Activated B cell treated with CpG ODN at 0.5 μM for 24 hours (primary cell): ENCODE measurements at regions of chr21 and their contacts with region 1.

Region 1: GRCh38 chr21:29104239-29104708 is 26.2 kb upstream of the MAP3K7CL start:
- DNase-seq: no peak
- ATAC-seq: no peak
- H3K4me3 Mint-ChIP-seq: no peak overlapping the region
- H3K27ac Mint-ChIP-seq: no peak overlapping the region
- H3K4me1 Mint-ChIP-seq: peaks cover 11% of the 10 kb centered on the region
- H3K27me3 Mint-ChIP-seq: no peaks in the 10 kb centered on the region
- CTCF ChIP-seq: no peak

Region 2: GRCh38 chr21:28633839-28634555 is 470.3 kb before region 1 on chr21:
- CTCF ChIA-PET with region 1: no interaction called
- POLR2A ChIA-PET with region 1: no interaction called
- intact Hi-C with region 1: no loop called
- DNase-seq: no peak
- ATAC-seq: no peak
- H3K4me3 Mint-ChIP-seq: no peak overlapping the region
- H3K27ac Mint-ChIP-seq: no peak overlapping the region
- H3K4me1 Mint-ChIP-seq: peaks cover 4% of the 10 kb centered on the region
- H3K27me3 Mint-ChIP-seq: no peaks in the 10 kb centered on the region
- CTCF ChIP-seq: no peak

Region 3: DNA sequence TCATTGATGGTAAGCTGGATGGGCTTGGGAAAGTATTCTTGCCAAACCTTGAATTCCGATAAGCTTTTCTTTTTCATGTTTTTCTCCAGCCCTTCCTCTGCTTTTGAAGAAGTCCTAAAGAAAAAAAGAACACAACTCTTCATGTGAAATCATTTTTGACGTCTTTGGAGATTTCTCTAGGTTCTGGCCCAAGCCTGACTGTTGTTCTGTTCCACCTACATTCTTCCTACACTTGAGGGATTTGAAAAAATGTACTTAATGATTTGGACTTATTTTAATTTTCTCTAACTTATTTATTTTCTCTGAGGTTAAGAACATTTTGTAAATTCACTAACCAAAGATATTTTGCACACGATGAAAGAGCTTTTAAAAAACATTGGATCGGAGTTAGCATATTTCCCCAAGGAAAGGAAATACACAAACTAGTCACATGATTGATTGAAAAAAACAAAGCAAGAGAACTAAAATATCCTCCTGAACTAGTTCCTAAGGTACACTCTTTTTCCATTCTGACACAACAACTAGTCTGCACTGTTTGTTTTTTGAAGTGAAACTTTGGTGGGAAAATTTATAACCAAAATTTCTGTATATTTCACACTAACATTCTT is 193.9 kb before region 1 on chr21:
- CTCF ChIA-PET with region 1: no interaction called
- POLR2A ChIA-PET with region 1: no interaction called
- intact Hi-C with region 1: no loop called
- DNase-seq: no peak
- ATAC-seq: no peak
- H3K4me3 Mint-ChIP-seq: no peak overlapping the region
- H3K27ac Mint-ChIP-seq: no peak overlapping the region
- H3K4me1 Mint-ChIP-seq: no peaks in the 10 kb centered on the region
- H3K27me3 Mint-ChIP-seq: peaks cover 32% of the 10 kb centered on the region
- CTCF ChIP-seq: no peak

Region 4: GRCh38 chr21:29125191-29125590 is 20.9 kb after region 1 on chr21:
- CTCF ChIA-PET with region 1: interaction called, 4 read pairs
- POLR2A ChIA-PET with region 1: interaction called, 4 read pairs
- intact Hi-C with region 1: loop called (anchors 2 kb)
- DNase-seq: no peak
- ATAC-seq: peak; percentile 83
- H3K4me3 Mint-ChIP-seq: no peak overlapping the region
- H3K27ac Mint-ChIP-seq: peak overlapping the region; percentile 69
- H3K4me1 Mint-ChIP-seq: peaks cover 42% of the 10 kb centered on the region
- H3K27me3 Mint-ChIP-seq: no peaks in the 10 kb centered on the region
- CTCF ChIP-seq: no peak

Region 5: DNA sequence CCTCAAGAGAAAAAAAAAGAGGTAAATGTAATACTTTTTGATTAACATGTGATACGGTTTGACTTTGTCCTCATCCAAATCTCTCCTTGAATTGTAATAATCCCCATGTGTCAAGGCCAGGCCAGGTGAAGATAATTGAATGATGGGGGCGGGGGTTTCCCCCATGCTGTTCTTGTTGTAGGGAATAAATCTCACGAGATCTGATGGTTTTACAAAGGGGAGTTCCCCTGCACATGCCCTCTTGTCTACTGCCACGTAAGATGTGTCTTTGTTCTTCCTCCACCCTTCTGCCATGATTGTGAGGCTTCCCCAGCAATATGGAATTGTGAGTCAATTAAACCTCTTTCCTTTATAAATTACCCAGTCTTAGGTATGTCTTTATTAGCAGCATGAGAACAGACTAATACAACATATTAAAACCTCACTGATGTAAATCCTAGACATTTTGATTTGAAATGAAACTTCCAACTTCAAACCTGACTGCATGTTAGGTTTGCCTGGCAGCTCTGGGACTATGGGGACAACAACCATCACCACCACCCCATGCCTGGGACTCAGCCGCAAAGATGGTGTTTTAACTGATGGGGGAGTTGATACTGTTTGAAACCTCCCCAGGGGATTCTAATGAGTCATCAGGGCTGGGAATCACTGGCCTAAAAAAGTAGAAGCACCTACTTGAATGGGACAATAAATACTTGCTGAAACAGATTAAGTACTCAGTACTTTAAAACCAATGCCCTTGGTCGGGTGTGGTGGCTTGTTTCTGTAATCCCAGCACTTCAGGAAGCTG is 161.6 kb after region 1 on chr21:
- CTCF ChIA-PET with region 1: no interaction called
- POLR2A ChIA-PET with region 1: no interaction called
- intact Hi-C with region 1: no loop called
- DNase-seq: no peak
- ATAC-seq: peak; percentile 86
- H3K4me3 Mint-ChIP-seq: peak overlapping the region; percentile 17
- H3K27ac Mint-ChIP-seq: peak overlapping the region; percentile 82
- H3K4me1 Mint-ChIP-seq: peaks cover 21% of the 10 kb centered on the region
- H3K27me3 Mint-ChIP-seq: no peaks in the 10 kb centered on the region
- CTCF ChIP-seq: no peak